GM18951 (cell line): ENCODE measurements at regions of chr9 and their contacts with region 1.

Region 1: GRCh38 chr9:134983074-134983473 is 65.4 kb upstream of the FCN1 start:
- POLR2A ChIP-seq: no peak

Region 2: DNA sequence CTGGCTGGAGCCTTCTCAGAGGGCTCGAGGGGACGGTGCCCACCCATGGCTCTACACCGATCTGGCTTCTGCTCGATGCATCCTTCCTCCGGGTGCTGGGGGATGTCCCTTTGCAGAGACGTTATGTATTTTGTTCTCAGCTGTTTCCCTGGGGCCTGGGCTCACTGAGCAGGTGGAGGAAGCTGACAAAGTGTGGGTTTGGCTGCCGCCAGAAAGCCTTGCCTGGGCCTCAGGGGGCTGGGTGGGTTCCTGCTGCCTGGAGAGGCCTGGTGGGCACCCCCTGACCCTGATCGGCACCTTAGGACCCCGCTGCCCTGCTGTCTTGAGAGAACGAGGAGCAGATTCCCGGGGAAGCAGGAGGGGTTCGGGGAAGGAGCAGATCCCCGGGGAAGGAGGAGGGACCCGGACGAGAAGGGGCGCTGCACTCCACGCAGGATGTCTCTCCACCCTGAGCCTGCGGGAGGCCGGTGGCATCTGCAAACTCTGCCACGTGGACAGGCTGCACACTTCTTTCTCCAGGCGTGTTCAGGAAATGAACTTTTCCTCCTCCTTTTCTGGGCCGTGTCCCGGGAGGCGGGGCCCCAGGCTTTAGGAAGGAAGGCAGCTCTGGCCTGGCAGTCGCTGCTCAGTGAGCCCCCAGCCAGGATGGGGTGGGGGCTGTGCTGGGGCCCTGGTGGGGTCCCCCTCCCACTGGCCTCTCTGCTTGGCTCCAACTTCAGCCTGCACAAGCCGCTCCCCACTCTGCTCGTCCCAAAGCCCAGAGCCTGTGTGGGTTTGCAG is 507.9 kb before region 1 on chr9:
- in situ Hi-C with region 1: loop called (anchors 25 kb)
- POLR2A ChIP-seq: no peak

Region 3: GRCh38 chr9:134698587-134699342 is 284.3 kb before region 1 on chr9:
- in situ Hi-C with region 1: loop called (anchors 10 kb)
- POLR2A ChIP-seq: no peak